ENCODE measurements at regions of chr16 and their contacts with region 1.

Region 1: GRCh38 chr16:26091511-26091910 is 399.8 kb downstream of the HS3ST4 start:
- DNase-seq: no peak
- ATAC-seq: no peak
- H3K4me3 ChIP-seq: no peak overlapping the region
- H3K27ac ChIP-seq: no peak overlapping the region
- H3K4me1 ChIP-seq: no peaks in the 10 kb centered on the region
- H3K27me3 ChIP-seq: no peaks in the 10 kb centered on the region
- CTCF ChIP-seq: no peak
- EP300 ChIP-seq: no peak
- POLR2A ChIP-seq: no peak
- RAD21 ChIP-seq: no peak

Region 2: GRCh38 chr16:25729188-25729915 is 362.2 kb before region 1 on chr16:
- CTCF ChIA-PET with region 1: no interaction called
- POLR2A ChIA-PET with region 1: no interaction called
- in situ Hi-C with region 1: no loop called
- intact Hi-C with region 1: loop called (anchors 10 kb)
- DNase-seq: no peak
- ATAC-seq: no peak
- H3K4me3 ChIP-seq: no peak overlapping the region
- H3K27ac ChIP-seq: no peak overlapping the region
- H3K4me1 ChIP-seq: no peaks in the 10 kb centered on the region
- H3K27me3 ChIP-seq: peaks cover 0 to 15% of the 10 kb centered on the region in 2 experiments; a peak in 3 of 5 replicates
- CTCF ChIP-seq: no peak
- EP300 ChIP-seq: no peak
- POLR2A ChIP-seq: no peak
- RAD21 ChIP-seq: no peak

Measured in K562 (cell line).